Activated naive CD4-positive, alpha-beta T cell treated with anti-CD3 and anti-CD28 coated beads for 36 hours (primary cell): ENCODE measurements at regions of chr16 and their contacts with region 1.

Region 1: GRCh38 chr16:3123986-3124886 is 10.6 kb upstream of the ZNF213 start:
- DNase-seq: peak; percentile 98
- H3K4me3 Mint-ChIP-seq: peak overlapping the region; percentile 96
- H3K27ac Mint-ChIP-seq: peak overlapping the region; percentile 89
- H3K4me1 Mint-ChIP-seq: peaks cover 34% of the 10 kb centered on the region
- H3K27me3 Mint-ChIP-seq: no peaks in the 10 kb centered on the region

Region 2: GRCh38 chr16:2905431-2906387 is 218.5 kb before region 1 on chr16:
- CTCF ChIA-PET with region 1: no interaction called
- intact Hi-C with region 1: no loop called
- DNase-seq: peak; percentile 99
- H3K4me3 Mint-ChIP-seq: peak overlapping the region; percentile 90
- H3K27ac Mint-ChIP-seq: no peak overlapping the region
- H3K4me1 Mint-ChIP-seq: peaks cover 18% of the 10 kb centered on the region
- H3K27me3 Mint-ChIP-seq: no peaks in the 10 kb centered on the region

Region 3: GRCh38 chr16:3003582-3004302 is 120.5 kb before region 1 on chr16:
- CTCF ChIA-PET with region 1: interaction called, 6 read pairs
- intact Hi-C with region 1: loop called (anchors 1 kb)
- DNase-seq: peak; percentile 98
- H3K4me3 Mint-ChIP-seq: peak overlapping the region; percentile 49
- H3K27ac Mint-ChIP-seq: no peak overlapping the region
- H3K4me1 Mint-ChIP-seq: peaks cover 23% of the 10 kb centered on the region
- H3K27me3 Mint-ChIP-seq: peaks cover 2% of the 10 kb centered on the region

Region 4: DNA sequence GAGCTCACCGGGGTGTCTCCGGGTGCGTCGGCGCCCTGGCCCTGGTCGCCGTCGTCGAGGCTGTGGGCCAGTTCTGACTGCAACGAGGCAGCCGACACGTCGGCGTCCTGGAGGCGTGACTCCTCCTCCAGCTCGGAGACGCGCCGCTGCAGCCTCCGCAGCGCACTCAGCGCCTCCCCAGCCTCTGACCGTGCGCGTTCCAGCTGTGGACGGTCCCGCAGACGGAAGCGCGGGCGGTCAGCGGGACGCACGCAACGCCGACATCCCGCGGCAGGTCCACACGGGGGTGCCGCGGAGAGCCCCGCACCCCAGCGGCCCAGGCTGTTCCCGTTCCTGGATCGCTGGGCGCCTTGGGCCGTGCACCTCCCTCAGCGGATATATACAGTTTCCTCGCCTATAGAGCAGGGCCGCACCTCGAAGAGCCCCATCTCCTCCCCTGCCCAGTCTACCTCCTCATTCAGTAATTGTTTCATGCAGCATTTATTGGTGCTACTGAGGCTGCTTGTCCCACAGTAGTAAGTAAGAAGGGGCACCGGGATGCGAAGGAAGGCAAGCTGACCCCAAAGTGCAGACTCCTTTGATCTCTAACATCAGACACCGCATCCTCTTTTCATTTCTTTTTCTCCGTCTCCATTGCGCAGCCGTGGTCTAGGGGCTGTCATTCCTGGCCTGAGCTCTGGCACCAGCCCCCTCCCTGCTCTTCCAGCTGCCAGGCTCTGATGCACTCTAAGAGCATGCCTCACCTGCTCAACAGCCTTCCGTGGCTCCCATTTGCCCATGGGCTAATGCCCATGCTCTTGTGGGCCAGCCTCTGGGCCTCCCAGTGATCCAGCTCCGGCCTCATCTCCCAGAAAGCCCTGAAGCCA is 94.5 kb before region 1 on chr16:
- CTCF ChIA-PET with region 1: interaction called, 81 read pairs
- intact Hi-C with region 1: no loop called
- DNase-seq: peak; percentile 52
- H3K4me3 Mint-ChIP-seq: peak overlapping the region; percentile 14
- H3K27ac Mint-ChIP-seq: no peak overlapping the region
- H3K4me1 Mint-ChIP-seq: peaks cover 20% of the 10 kb centered on the region
- H3K27me3 Mint-ChIP-seq: peaks cover 39% of the 10 kb centered on the region

Region 5: DNA sequence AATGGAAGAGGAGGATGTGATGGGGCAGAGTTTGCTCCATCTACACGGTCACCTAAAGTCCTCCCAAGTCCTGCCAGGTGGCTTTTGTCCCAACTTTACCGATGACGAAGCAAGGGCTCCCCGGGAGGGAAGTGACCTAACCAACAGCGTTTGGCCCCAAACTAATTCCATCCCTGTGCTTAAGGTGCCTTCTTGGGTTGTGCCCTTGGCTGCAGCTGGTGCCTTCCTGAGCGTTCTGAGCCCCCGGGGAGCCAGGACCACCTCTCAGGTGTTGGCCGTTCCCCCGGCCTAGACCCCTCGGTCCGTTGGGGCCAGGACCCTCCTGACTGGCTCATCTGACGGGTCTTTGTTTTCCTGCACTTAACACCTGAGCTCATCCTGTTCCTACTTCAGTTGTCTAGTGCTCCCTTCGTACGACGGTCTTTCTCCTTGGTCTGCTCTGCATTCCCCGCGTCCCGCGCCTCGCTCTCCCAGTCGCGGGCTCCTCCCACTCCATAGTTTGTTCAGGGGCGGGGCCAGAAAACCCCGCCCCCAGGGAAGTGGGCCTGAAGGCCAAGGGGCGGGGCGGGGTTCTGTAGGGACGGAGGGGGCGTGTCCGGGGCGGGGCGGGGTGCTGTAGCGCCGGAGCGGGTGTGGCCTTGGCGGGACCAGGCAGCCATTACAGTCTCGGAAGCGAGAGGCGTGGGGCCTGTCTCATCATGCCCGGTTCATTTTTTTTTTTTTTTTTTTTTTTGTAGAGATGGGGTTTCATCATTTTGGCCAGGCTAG is 24.3 kb before region 1 on chr16:
- CTCF ChIA-PET with region 1: interaction called, 122 read pairs
- intact Hi-C with region 1: loop called (anchors 1 kb)
- DNase-seq: peak; percentile 97
- H3K4me3 Mint-ChIP-seq: peak overlapping the region; percentile 69
- H3K27ac Mint-ChIP-seq: no peak overlapping the region
- H3K4me1 Mint-ChIP-seq: peaks cover 36% of the 10 kb centered on the region
- H3K27me3 Mint-ChIP-seq: no peaks in the 10 kb centered on the region

Region 6: DNA sequence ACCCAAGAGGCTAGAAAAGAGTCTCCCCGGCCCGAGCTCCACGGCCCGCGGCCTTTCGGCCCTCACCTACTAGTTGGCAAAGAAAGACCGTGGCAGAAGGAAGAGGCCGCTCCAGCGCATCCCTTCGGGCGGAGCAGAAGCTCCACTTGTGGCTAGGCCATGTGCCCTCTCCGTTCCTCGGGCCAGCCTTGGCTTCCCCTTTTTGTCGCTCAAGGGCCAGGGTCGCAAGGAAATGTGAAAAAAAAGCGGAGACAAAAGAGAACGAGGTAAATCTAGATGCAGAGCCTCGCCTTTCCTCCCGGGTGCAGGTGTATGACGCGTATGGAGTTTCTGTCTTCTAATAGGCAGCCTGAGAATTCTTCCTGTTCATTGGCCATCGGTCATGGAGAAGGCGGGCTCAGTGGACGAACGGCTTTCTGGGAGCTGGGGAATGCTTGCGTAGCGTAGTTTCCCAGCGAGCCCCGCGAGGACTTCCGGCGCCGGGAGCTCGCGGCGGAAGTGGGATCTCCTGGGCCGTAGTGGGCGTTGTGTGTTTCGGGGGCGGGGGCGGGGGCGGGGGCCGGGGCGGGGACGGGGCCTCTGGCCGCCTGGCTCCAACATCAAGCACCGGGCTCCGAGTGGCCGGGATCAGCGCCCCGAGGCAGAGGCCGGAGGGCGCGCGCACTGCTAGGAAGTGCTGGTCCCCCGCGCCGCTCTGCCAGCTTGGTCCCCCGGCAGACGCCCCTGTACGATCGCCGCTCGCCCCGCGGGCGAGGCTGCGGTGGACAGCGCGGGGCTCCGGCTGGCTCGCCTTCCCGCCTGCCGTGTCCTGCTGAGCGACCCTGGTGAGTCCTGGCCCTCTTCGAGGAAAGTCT is 10.6 kb after region 1 on chr16 and contains the start of gene ZNF213:
- CTCF ChIA-PET with region 1: interaction called, 10 read pairs
- intact Hi-C with region 1: loop called (anchors 1 kb)
- DNase-seq: peak; percentile 97
- H3K4me3 Mint-ChIP-seq: peak within 1 kb of the TSS; percentile 99
- H3K27ac Mint-ChIP-seq: peak within 1 kb of the TSS; percentile 91
- H3K4me1 Mint-ChIP-seq: peaks cover 29% of the 10 kb centered on the region
- H3K27me3 Mint-ChIP-seq: no peaks in the 10 kb centered on the region
- total RNA-seq, gene ZNF213: 6.1 to 6.5 TPM